Naive thymus-derived CD4-positive, alpha-beta T cell (primary cell): ENCODE measurements at regions of chr1 and their contacts with region 1.

Region 1: GRCh38 chr1:219359126-219359525 is 185.4 kb downstream of the LYPLAL1 start:
- DNase-seq: no peak
- ATAC-seq: no peak
- H3K4me3 ChIP-seq: no peak overlapping the region
- H3K4me3 Mint-ChIP-seq: no peak overlapping the region
- H3K27ac ChIP-seq: no peak overlapping the region
- H3K27ac Mint-ChIP-seq: no peak overlapping the region
- H3K4me1 ChIP-seq: no peaks in the 10 kb centered on the region
- H3K4me1 Mint-ChIP-seq: peaks cover 0 to 2% (median 0%) of the 10 kb centered on the region in 7 donors
- H3K27me3 ChIP-seq: no peaks in the 10 kb centered on the region
- H3K27me3 Mint-ChIP-seq: no peaks in the 10 kb centered on the region

Region 2: DNA sequence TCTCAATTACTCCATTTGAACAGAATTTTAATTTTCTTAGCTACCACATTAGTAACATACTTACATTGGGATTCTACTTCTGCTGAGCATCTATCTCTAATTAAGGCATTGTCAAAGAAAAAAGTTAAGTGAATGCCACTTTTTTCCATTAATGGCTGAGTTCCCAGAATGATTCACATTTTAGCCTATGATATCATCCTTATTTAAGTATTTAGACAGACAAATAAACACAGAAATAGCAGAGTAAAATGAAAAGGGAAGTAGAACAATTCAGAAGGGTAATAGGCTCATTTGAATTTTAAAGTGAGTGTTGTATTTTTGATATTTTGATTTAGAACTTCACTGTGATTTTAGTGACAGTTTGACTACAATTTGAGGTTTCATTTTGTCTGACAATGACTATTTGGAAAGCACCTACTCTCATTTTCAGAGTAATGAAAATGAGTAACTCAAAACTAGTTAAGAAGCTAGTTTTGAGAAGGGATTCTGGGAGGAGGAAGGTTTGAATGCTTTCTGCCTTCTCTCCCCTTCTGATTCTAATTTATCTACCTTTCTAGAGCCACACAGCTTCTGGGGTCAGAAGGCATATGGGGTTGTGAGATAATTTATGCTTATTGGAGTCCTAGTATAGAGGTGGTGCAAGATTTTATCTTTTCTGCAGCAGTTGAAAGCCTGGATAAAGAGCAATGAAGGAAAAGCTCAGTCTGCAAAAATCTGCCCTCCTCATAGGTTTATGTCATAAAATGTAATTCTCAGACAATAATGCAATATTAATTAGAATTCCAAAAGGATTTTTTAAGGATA is 169.9 kb before region 1 on chr1:
- CTCF ChIA-PET with region 1: no interaction called
- POLR2A ChIA-PET with region 1: no interaction called
- intact Hi-C with region 1: no loop called
- DNase-seq: no peak
- ATAC-seq: no peak
- H3K4me3 ChIP-seq: no peak overlapping the region
- H3K4me3 Mint-ChIP-seq: peak overlapping the region in 1 of 10 donors; percentile 58
- H3K27ac ChIP-seq: no peak overlapping the region
- H3K27ac Mint-ChIP-seq: peak overlapping the region in 1 of 9 donors; percentile 55
- H3K4me1 ChIP-seq: no peaks in the 10 kb centered on the region
- H3K4me1 Mint-ChIP-seq: peaks cover 17 to 43% (median 29%) of the 10 kb centered on the region in 7 donors
- H3K27me3 ChIP-seq: no peaks in the 10 kb centered on the region
- H3K27me3 Mint-ChIP-seq: no peaks in the 10 kb centered on the region

Region 3: GRCh38 chr1:219398815-219399396 is 39.8 kb after region 1 on chr1:
- CTCF ChIA-PET with region 1: no interaction called
- POLR2A ChIA-PET with region 1: no interaction called
- intact Hi-C with region 1: loop called in 1 of 2 experiments (anchors 5 kb)
- DNase-seq: no peak
- ATAC-seq: peak; percentile 16
- H3K4me3 ChIP-seq: no peak overlapping the region
- H3K4me3 Mint-ChIP-seq: no peak overlapping the region
- H3K27ac ChIP-seq: no peak overlapping the region
- H3K27ac Mint-ChIP-seq: no peak overlapping the region
- H3K4me1 ChIP-seq: no peaks in the 10 kb centered on the region
- H3K4me1 Mint-ChIP-seq: no peaks in the 10 kb centered on the region
- H3K27me3 ChIP-seq: no peaks in the 10 kb centered on the region
- H3K27me3 Mint-ChIP-seq: peaks cover 0 to 23% (median 14%) of the 10 kb centered on the region in 5 donors